IMR-90 (cell line): ENCODE measurements at regions of chr10 and their contacts with region 1.

Region 1: GRCh38 chr10:3467052-3467951 is 294.7 kb upstream of the PITRM1 start:
- DNase-seq: peak; percentile 93
- ATAC-seq: peak; percentile 58
- H3K4me3 ChIP-seq: no peak overlapping the region
- H3K27ac ChIP-seq: peak overlapping the region; percentile 89
- H3K4me1 ChIP-seq: peaks cover 22% of the 10 kb centered on the region
- H3K27me3 ChIP-seq: no peaks in the 10 kb centered on the region
- CTCF ChIP-seq: 0 out of 2 replicates have a peak, but pooled peaks have one; percentile 15
- POLR2A ChIP-seq: no peak
- RAD21 ChIP-seq: no peak

Region 2: GRCh38 chr10:2519139-2519538 is 948.2 kb before region 1 on chr10:
- CTCF ChIA-PET with region 1: no interaction called
- POLR2A ChIA-PET with region 1: no interaction called
- dilution Hi-C with region 1: no loop called
- in situ Hi-C with region 1: no loop called
- intact Hi-C with region 1: no loop called
- DNase-seq: no peak
- ATAC-seq: no peak
- H3K4me3 ChIP-seq: no peak overlapping the region
- H3K27ac ChIP-seq: no peak overlapping the region
- H3K4me1 ChIP-seq: no peaks in the 10 kb centered on the region
- H3K27me3 ChIP-seq: no peaks in the 10 kb centered on the region
- CTCF ChIP-seq: no peak
- POLR2A ChIP-seq: no peak
- RAD21 ChIP-seq: no peak

Region 3: GRCh38 chr10:3197348-3198003 is 269.8 kb before region 1 on chr10:
- CTCF ChIA-PET with region 1: interaction called, 5 read pairs
- POLR2A ChIA-PET with region 1: no interaction called
- dilution Hi-C with region 1: no loop called
- in situ Hi-C with region 1: no loop called
- intact Hi-C with region 1: loop called (anchors 1 kb)
- DNase-seq: peak; percentile 84
- ATAC-seq: peak; percentile 91
- H3K4me3 ChIP-seq: peak overlapping the region; percentile 37
- H3K27ac ChIP-seq: peak overlapping the region; percentile 12
- H3K4me1 ChIP-seq: peaks cover 10% of the 10 kb centered on the region
- H3K27me3 ChIP-seq: peaks cover 9% of the 10 kb centered on the region
- CTCF ChIP-seq: peak; percentile 95
- POLR2A ChIP-seq: peak; percentile 66
- RAD21 ChIP-seq: peak; percentile 98

Region 4: GRCh38 chr10:3293581-3294431 is 173.5 kb before region 1 on chr10:
- CTCF ChIA-PET with region 1: no interaction called
- POLR2A ChIA-PET with region 1: no interaction called
- dilution Hi-C with region 1: no loop called
- in situ Hi-C with region 1: no loop called
- intact Hi-C with region 1: no loop called
- DNase-seq: peak; percentile 17
- ATAC-seq: no peak
- H3K4me3 ChIP-seq: no peak overlapping the region
- H3K27ac ChIP-seq: no peak overlapping the region
- H3K4me1 ChIP-seq: peaks cover 2% of the 10 kb centered on the region; the same call in 1 of the 2 replicates
- H3K27me3 ChIP-seq: 0 out of 2 replicates have a peak, but pooled peaks cover 1% of the 10 kb centered on the region
- CTCF ChIP-seq: no peak
- POLR2A ChIP-seq: no peak
- RAD21 ChIP-seq: no peak

Region 5: DNA sequence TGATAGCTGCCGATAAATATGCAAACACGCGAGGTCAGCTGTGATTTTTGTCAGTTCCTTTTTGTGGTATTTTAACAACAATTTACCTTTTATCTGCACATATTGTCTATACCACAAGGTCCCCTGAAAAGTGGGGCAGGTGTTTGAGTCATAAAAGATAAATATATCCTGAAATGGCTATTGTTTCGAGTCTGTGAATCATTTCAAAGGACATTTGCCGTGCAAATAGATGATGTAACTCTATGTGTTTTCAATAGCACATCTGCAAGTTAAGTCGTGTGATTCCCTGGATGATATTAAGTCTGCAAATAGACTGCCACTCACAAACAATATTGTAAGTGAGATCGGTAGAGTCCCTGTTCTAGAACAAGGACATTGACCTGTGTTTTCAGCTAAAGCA is 101.7 kb before region 1 on chr10:
- CTCF ChIA-PET with region 1: no interaction called
- POLR2A ChIA-PET with region 1: no interaction called
- dilution Hi-C with region 1: no loop called
- in situ Hi-C with region 1: no loop called
- intact Hi-C with region 1: no loop called
- DNase-seq: no peak
- ATAC-seq: no peak
- H3K4me3 ChIP-seq: no peak overlapping the region
- H3K27ac ChIP-seq: no peak overlapping the region
- H3K4me1 ChIP-seq: peaks cover 9% of the 10 kb centered on the region; the same call in 1 of the 2 replicates
- H3K27me3 ChIP-seq: no peaks in the 10 kb centered on the region
- CTCF ChIP-seq: no peak
- POLR2A ChIP-seq: no peak
- RAD21 ChIP-seq: no peak

Region 6: DNA sequence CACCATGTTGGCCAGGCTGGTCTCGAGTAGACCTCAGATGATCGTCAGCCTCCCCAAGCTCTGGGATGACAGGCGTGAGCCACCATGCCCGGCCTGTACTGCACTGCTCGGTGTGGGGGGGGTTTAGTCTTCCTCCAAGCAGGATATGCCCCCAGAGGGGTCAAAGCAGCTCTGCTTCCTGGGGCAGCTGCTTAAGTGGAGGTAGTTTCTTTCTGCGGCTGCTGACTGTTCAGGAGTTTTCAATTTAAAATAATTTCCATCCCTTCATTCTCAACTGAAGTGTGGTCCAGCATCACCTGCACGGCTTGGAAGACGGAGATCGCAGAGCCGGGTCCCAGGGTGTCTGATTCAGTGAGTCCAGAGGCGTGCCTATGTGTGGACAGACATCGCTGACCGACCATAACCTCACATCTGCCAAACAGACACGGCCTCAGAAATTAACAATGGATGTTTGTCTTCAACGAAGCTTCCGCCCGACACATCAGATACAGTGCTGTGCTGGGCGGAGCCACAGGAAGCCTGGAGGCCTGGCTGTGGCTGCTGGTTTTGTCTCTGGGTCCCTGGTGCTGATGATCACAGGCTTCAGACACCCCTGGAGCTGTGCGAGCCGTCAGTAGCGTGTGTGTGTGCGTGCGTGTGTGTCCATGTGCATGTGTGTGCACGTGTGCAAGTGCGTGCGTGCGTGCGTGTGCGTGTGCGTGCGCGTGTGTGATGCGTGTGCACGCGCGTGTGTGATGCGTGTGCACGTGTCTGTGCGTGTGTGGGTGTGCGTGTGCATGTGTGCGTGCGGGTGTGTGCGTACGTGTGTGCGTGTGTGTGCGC is 68.3 kb before region 1 on chr10:
- CTCF ChIA-PET with region 1: no interaction called
- POLR2A ChIA-PET with region 1: no interaction called
- dilution Hi-C with region 1: no loop called
- in situ Hi-C with region 1: no loop called
- intact Hi-C with region 1: no loop called
- DNase-seq: no peak
- ATAC-seq: no peak
- H3K4me3 ChIP-seq: no peak overlapping the region
- H3K27ac ChIP-seq: no peak overlapping the region
- H3K4me1 ChIP-seq: peaks cover 10% of the 10 kb centered on the region
- H3K27me3 ChIP-seq: no peaks in the 10 kb centered on the region
- CTCF ChIP-seq: no peak
- POLR2A ChIP-seq: no peak
- RAD21 ChIP-seq: no peak

Region 7: DNA sequence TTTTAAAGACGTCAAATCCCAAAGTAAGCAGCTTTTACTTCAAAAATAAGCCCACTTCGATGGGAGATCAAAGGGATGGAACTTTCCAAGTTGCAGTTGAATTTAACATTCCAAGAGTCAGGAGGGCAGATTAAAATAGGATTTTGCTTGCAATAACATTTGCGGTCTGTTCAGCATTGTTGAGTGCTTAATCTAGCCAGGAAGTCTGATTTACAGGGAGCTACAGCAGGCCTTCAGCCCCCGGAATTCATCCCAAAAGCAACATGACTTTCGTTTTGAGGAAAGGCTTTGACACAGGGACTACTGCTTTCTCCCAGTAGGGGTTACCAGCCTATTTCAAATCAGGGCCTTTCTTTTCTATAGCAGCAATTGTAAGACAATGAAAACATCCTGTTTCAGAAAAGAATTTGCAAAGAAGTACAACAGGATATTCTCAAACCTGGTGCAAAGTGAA is 15.1 kb before region 1 on chr10:
- CTCF ChIA-PET with region 1: interaction called, 3 read pairs
- POLR2A ChIA-PET with region 1: no interaction called
- dilution Hi-C with region 1: no loop called
- in situ Hi-C with region 1: no loop called
- intact Hi-C with region 1: loop called (anchors 2 kb)
- DNase-seq: peak; percentile 97
- ATAC-seq: peak; percentile 92
- H3K4me3 ChIP-seq: peak overlapping the region; percentile 17; the same call in 1 of the 2 replicates
- H3K27ac ChIP-seq: peak overlapping the region; percentile 95; the same call in 1 of the 2 replicates
- H3K4me1 ChIP-seq: peaks cover 13% of the 10 kb centered on the region
- H3K27me3 ChIP-seq: no peaks in the 10 kb centered on the region
- CTCF ChIP-seq: peak; percentile 68
- POLR2A ChIP-seq: 0 out of 2 replicates have a peak, but pooled peaks have one; percentile 37
- RAD21 ChIP-seq: peak; percentile 75

Region 8: DNA sequence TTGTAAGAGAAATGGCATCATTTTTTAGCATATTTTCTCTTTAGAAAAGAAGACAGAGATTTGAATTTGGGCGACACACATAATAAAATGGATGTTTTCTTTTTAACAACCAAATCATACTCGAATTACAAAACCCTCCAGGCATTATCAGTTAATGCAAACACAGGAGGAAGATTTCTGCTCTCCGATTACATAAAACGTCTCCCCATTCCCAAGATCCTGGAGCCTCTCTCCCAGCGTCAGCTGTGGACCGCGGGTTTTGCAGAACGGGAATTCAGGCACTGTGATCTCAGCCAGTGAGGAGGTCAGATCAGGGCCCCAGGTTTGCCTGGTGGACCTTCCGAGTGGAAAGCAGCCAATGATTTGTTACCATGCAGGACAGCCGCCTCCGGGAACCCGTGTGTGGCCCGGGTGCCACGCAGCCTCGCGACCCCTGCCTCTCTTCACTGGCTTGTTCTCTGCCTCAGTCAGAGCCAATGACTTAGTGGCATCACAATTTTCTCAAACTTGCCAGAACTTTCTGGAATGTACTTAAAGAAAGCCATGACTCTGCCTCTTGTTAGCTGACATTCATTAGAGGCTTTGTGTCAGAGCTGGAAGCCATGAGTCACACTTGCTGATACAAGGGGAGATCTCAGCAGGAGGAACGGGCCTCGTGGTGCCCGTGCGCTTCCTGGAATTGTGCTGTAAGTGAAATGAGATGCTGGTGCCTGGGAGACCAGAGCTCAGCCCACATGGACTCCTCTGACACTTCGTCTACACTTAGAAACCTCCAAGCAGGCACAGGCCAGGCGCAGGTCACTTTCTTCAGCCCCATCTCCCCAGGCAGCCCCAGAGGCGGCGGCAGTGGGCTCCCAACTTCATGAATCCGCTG is 71.6 kb after region 1 on chr10:
- CTCF ChIA-PET with region 1: no interaction called
- POLR2A ChIA-PET with region 1: no interaction called
- dilution Hi-C with region 1: no loop called
- in situ Hi-C with region 1: no loop called
- intact Hi-C with region 1: loop called (anchors 2 kb)
- DNase-seq: peak; percentile 97
- ATAC-seq: peak; percentile 86
- H3K4me3 ChIP-seq: peak overlapping the region; percentile 3; the same call in 1 of the 2 replicates
- H3K27ac ChIP-seq: peak overlapping the region; percentile 80
- H3K4me1 ChIP-seq: peaks cover 22% of the 10 kb centered on the region
- H3K27me3 ChIP-seq: no peaks in the 10 kb centered on the region
- CTCF ChIP-seq: no peak
- POLR2A ChIP-seq: no peak
- RAD21 ChIP-seq: no peak

Region 9: DNA sequence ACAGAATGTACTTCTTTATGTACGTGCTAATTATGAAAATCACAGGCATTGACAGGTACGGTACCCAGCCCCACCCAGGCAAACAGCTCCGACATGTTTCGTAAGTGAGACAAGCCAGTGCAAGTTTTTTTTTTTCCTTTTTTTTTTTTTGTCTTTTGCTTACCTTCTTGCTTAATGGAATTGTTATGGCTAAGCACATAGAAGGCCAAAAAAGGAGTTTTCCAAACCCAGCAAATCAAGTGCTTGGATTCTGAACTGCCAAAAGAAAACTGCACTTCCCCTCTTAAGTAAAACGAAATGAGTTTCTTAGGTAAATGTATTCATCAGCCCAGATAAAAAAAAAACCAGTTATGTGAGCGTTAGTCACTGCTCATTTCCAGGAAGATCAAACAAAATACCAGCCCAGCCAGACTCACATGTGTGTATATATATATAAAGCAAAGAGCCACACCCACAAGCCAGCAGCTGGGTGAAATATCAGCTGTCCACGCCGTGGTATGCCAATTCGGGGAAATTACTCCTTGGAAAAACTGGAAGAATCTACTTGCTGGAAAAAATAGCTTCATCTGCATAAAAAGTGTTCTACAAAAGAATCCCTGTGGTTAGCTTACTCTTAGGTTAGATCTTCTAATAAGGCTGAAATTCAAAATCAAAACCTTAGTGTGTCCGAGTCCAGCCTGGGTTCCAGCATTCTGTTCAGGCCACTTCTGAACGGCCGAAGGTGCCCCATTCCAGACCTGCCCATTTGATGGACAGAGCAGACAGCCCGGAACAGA is 309.7 kb after region 1 on chr10:
- CTCF ChIA-PET with region 1: no interaction called
- POLR2A ChIA-PET with region 1: no interaction called
- dilution Hi-C with region 1: no loop called
- in situ Hi-C with region 1: loop called (anchors 10 kb)
- intact Hi-C with region 1: loop called (anchors 1 kb)
- DNase-seq: peak; percentile 94
- ATAC-seq: peak; percentile 21
- H3K4me3 ChIP-seq: no peak overlapping the region
- H3K27ac ChIP-seq: peak overlapping the region; percentile 90
- H3K4me1 ChIP-seq: peaks cover 32% of the 10 kb centered on the region
- H3K27me3 ChIP-seq: no peaks in the 10 kb centered on the region
- CTCF ChIP-seq: no peak
- POLR2A ChIP-seq: no peak; the same call in none of the 2 replicates
- RAD21 ChIP-seq: no peak

Region 10: DNA sequence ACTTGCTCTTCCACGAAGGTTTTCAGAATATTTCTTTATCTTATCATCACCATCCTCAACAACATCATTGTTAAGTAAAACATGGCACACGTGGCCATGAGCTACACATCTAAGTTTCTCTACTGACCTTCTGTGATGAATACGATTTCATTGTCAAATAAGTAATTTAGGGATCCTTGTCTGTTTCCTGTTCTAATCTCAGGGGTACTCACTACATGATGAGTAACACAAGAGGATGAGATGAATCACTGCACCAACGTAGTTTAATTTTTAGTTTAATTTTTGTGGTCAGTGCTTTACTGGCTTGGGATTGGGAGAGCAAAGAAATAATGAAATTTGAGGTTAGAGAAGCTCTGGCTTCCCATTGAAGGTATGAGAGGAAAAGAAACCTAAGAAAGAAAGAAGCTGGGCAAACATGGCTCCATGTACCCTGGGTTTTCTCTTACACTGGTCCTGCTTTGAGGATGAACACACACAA is 779.6 kb after region 1 on chr10:
- CTCF ChIA-PET with region 1: no interaction called
- POLR2A ChIA-PET with region 1: no interaction called
- dilution Hi-C with region 1: no loop called
- in situ Hi-C with region 1: no loop called
- intact Hi-C with region 1: loop called (anchors 5 kb)
- DNase-seq: peak; percentile 98
- ATAC-seq: peak; percentile 82
- H3K4me3 ChIP-seq: peak overlapping the region; percentile 48; the same call in 1 of the 2 replicates
- H3K27ac ChIP-seq: peak overlapping the region; percentile 87
- H3K4me1 ChIP-seq: peaks cover 18% of the 10 kb centered on the region
- H3K27me3 ChIP-seq: no peaks in the 10 kb centered on the region
- CTCF ChIP-seq: no peak
- POLR2A ChIP-seq: peak; percentile 61; the same call in 1 of the 2 replicates
- RAD21 ChIP-seq: no peak